ENCODE measurements at regions of chr17 and their contacts with region 1.

Region 1: GRCh38 chr17:67584991-67585602 is 132.6 kb upstream of the NOL11 start:
- DNase-seq: peak; percentile 32 to 93
- H3K4me3 ChIP-seq: no peak overlapping the region
- H3K27ac ChIP-seq: peak overlapping the region; percentile 67
- H3K4me1 ChIP-seq: peaks cover 20% of the 10 kb centered on the region
- H3K27me3 ChIP-seq: no peaks in the 10 kb centered on the region
- CTCF ChIP-seq: no peak

Region 2: GRCh38 chr17:66964930-66965800 is 619.9 kb before region 1 on chr17:
- CTCF ChIA-PET with region 1: no interaction called
- POLR2A ChIA-PET with region 1: no interaction called
- intact Hi-C with region 1: no loop called
- DNase-seq: peak in 1 of 2 experiments; percentile 64
- H3K4me3 ChIP-seq: peak overlapping the region; percentile 77
- H3K27ac ChIP-seq: no peak overlapping the region
- H3K4me1 ChIP-seq: peaks cover 25% of the 10 kb centered on the region; the same call in 1 of the 2 replicates
- H3K27me3 ChIP-seq: no peaks in the 10 kb centered on the region
- CTCF ChIP-seq: no peak

Region 3: DNA sequence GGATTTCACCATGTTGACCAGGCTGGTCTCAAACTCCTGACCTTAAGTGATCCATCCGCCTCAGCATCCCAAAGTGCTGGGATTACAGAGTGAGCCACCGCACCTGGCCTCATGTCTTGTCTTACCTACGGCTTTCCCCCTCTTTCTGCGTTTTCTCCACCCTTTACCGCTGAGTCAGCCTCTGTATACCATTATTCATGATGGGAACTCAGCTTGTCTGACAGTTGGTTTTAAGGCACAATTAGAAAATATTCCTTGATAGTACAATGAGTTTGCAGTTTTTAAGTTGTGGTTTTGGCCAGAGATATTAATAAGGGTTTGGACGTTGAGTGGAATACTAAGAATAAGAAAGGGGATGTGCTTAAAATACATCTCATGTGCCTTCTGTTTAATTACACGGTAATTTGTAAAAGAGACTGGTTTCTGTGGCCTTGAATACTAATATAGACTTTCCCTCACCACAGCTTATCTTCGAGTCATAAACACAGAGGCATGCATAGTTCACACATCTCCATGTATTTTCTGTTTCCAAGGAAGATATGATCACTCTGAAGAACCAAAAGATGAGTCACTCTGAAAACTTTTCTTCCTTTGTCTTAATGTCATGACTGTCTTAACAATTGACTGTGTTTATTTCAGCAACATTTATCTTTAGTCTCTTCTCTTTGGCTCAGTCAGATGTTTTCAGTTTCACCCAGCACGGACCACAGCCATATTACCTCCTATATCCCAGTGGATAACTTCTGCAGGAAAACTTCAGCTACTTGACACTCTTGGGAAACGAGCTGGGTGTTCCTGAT is 153.6 kb before region 1 on chr17:
- CTCF ChIA-PET with region 1: interaction called, 12 read pairs
- POLR2A ChIA-PET with region 1: no interaction called
- intact Hi-C with region 1: no loop called
- DNase-seq: peak; percentile 25 to 75
- H3K4me3 ChIP-seq: no peak overlapping the region
- H3K27ac ChIP-seq: peak overlapping the region; percentile 43
- H3K4me1 ChIP-seq: peaks cover 10% of the 10 kb centered on the region
- H3K27me3 ChIP-seq: no peaks in the 10 kb centered on the region
- CTCF ChIP-seq: no peak

Region 4: DNA sequence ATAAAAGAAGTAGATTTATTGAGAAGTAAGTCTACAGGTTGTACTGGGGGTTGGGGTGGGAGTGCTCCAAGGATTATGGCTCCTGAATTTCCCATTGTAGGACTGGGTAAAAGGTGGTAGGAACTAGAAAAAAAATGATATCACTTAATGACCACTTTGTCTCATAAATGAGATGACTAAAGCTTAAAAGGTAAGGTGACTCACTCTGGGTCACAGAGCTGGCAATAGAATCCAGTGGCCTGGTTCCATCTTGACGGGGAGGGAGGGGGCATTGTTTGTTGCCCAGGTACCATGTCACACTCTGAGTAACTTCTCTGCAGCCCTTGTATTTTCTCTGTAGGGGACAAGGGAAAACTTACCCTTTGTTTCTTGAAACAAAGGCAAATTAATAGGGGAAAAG is 81.9 kb before region 1 on chr17:
- CTCF ChIA-PET with region 1: interaction called, 14 read pairs
- POLR2A ChIA-PET with region 1: no interaction called
- intact Hi-C with region 1: no loop called
- DNase-seq: peak; percentile 48 to 81
- H3K4me3 ChIP-seq: no peak overlapping the region
- H3K27ac ChIP-seq: peak overlapping the region; percentile 24; the same call in 1 of the 2 replicates
- H3K4me1 ChIP-seq: peaks cover 28% of the 10 kb centered on the region
- H3K27me3 ChIP-seq: no peaks in the 10 kb centered on the region
- CTCF ChIP-seq: no peak

Region 5: GRCh38 chr17:67637917-67638641 is 53.0 kb after region 1 on chr17:
- CTCF ChIA-PET with region 1: no interaction called
- POLR2A ChIA-PET with region 1: interaction called, 19 read pairs
- intact Hi-C with region 1: no loop called
- DNase-seq: peak; percentile 88 to 98
- H3K4me3 ChIP-seq: peak overlapping the region; percentile 32; the same call in 1 of the 2 replicates
- H3K27ac ChIP-seq: peak overlapping the region; percentile 81
- H3K4me1 ChIP-seq: peaks cover 37% of the 10 kb centered on the region
- H3K27me3 ChIP-seq: no peaks in the 10 kb centered on the region
- CTCF ChIP-seq: no peak

Region 6: GRCh38 chr17:67751101-67752074 is 166.3 kb after region 1 on chr17:
- CTCF ChIA-PET with region 1: no interaction called
- POLR2A ChIA-PET with region 1: no interaction called
- intact Hi-C with region 1: no loop called
- DNase-seq: no peak
- H3K4me3 ChIP-seq: no peak overlapping the region
- H3K27ac ChIP-seq: no peak overlapping the region
- H3K4me1 ChIP-seq: peaks cover 15% of the 10 kb centered on the region
- H3K27me3 ChIP-seq: no peaks in the 10 kb centered on the region
- CTCF ChIP-seq: no peak

Measured in PC-9 (cell line).